ENCODE measurements at regions of chr7 and their contacts with region 1.

Region 1: DNA sequence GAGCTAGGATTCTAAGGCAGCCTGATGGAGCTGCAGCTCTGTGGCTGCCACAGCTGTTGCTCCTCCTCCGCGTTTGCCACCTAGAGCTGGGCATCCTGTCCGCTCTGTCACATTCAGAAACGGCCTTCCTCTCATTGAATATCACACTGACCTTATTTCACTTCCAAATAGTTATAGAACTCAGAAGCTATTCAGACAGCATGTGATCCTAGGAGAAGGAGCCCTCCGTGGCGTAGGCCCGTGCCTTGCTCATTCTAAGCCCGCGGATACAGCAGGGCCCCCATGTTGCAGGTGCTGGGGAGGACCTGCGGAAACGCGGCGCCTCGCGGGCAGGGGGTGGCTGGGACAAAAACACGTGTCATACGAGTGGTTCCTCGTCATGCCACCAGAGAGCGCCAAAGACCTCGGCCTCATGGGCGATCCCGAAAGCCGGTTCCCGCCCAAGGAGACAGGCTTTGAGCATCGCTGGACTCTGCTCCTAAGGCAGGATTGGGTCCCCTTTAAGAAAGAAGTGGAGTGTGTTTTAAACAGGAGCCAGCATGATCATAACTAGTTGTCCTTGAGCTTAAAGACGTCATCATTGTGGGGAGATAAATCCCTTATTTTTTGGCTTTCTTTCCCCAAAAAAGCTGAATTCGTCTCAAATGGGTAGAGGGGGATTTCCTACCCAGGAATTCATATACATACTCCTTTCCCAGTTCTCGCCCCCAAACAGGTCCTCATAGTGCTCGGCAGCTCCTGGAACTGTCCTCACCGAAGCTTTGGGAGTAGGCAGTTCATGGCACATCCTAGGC is 17.9 kb upstream of the FIGNL1 start:
- DNase-seq: peak; percentile 83 to 88
- H3K4me3 ChIP-seq: no peak overlapping the region
- H3K4me3 Mint-ChIP-seq: no peak overlapping the region
- H3K27ac Mint-ChIP-seq: peak overlapping the region; percentile 30
- H3K4me1 ChIP-seq: no peaks in the 10 kb centered on the region
- H3K4me1 Mint-ChIP-seq: peaks cover 6% of the 10 kb centered on the region
- H3K27me3 ChIP-seq: no peaks in the 10 kb centered on the region
- H3K27me3 Mint-ChIP-seq: no peaks in the 10 kb centered on the region
- CTCF ChIP-seq: peak; percentile 83 to 86

Region 2: GRCh38 chr7:50206453-50207250 is 261.4 kb before region 1 on chr7:
- CTCF ChIA-PET with region 1: no interaction called
- POLR2A ChIA-PET with region 1: no interaction called
- intact Hi-C with region 1: loop called (anchors 5 kb)
- DNase-seq: no peak
- H3K4me3 ChIP-seq: no peak overlapping the region
- H3K4me3 Mint-ChIP-seq: no peak overlapping the region
- H3K27ac Mint-ChIP-seq: no peak overlapping the region
- H3K4me1 ChIP-seq: no peaks in the 10 kb centered on the region
- H3K4me1 Mint-ChIP-seq: peaks cover 12% of the 10 kb centered on the region
- H3K27me3 ChIP-seq: no peaks in the 10 kb centered on the region; the same call in 1 of the 2 replicates
- H3K27me3 Mint-ChIP-seq: peaks cover 37% of the 10 kb centered on the region
- CTCF ChIP-seq: no peak

Region 3: GRCh38 chr7:50560865-50561351 is 92.9 kb after region 1 on chr7:
- CTCF ChIA-PET with region 1: interaction called, 3 read pairs
- POLR2A ChIA-PET with region 1: no interaction called
- intact Hi-C with region 1: loop called (anchors 2 kb)
- DNase-seq: no peak
- H3K4me3 ChIP-seq: no peak overlapping the region
- H3K4me3 Mint-ChIP-seq: no peak overlapping the region
- H3K27ac Mint-ChIP-seq: no peak overlapping the region
- H3K4me1 ChIP-seq: peaks cover 46% of the 10 kb centered on the region
- H3K4me1 Mint-ChIP-seq: peaks cover 56% of the 10 kb centered on the region
- H3K27me3 ChIP-seq: no peaks in the 10 kb centered on the region
- H3K27me3 Mint-ChIP-seq: no peaks in the 10 kb centered on the region
- CTCF ChIP-seq: no peak

Region 4: GRCh38 chr7:50610521-50611277 is 142.7 kb after region 1 on chr7:
- CTCF ChIA-PET with region 1: interaction called, 6 read pairs
- POLR2A ChIA-PET with region 1: no interaction called
- intact Hi-C with region 1: loop called (anchors 1 kb)
- DNase-seq: no peak
- H3K4me3 ChIP-seq: no peak overlapping the region
- H3K4me3 Mint-ChIP-seq: no peak overlapping the region
- H3K27ac Mint-ChIP-seq: no peak overlapping the region
- H3K4me1 ChIP-seq: peaks cover 9% of the 10 kb centered on the region
- H3K4me1 Mint-ChIP-seq: peaks cover 13% of the 10 kb centered on the region
- H3K27me3 ChIP-seq: no peaks in the 10 kb centered on the region
- H3K27me3 Mint-ChIP-seq: no peaks in the 10 kb centered on the region
- CTCF ChIP-seq: no peak

Region 5: GRCh38 chr7:50679218-50680007 is 211.4 kb after region 1 on chr7:
- CTCF ChIA-PET with region 1: no interaction called
- POLR2A ChIA-PET with region 1: no interaction called
- intact Hi-C with region 1: loop called (anchors 1 kb)
- DNase-seq: peak in 1 of 2 experiments; percentile 22
- H3K4me3 ChIP-seq: no peak overlapping the region
- H3K4me3 Mint-ChIP-seq: no peak overlapping the region
- H3K27ac Mint-ChIP-seq: no peak overlapping the region
- H3K4me1 ChIP-seq: no peaks in the 10 kb centered on the region
- H3K4me1 Mint-ChIP-seq: no peaks in the 10 kb centered on the region
- H3K27me3 ChIP-seq: no peaks in the 10 kb centered on the region
- H3K27me3 Mint-ChIP-seq: no peaks in the 10 kb centered on the region
- CTCF ChIP-seq: peak in 1 of 2 experiments; percentile 15